Motor neuron (in vitro differentiated cells): ENCODE measurements at regions of chr16 and their contacts with region 1.

Region 1: GRCh38 chr16:89217388-89218191 is at the start of gene ZNF778:
- ATAC-seq: peak; percentile 83 to 94 (median 87)
- H3K4me3 ChIP-seq: peak within 1 kb of the TSS; percentile 66 to 92 (median 84)
- H3K27ac ChIP-seq: peak within 1 kb of the TSS; percentile 70 to 86
- H3K4me1 ChIP-seq: peaks cover 11 to 14% of the 10 kb centered on the region in 2 donors
- total RNA-seq, gene ZNF778: 6.8 to 14.7 (median 9.0) TPM

Region 2: GRCh38 chr16:88455610-88456355 is 761.8 kb before region 1 on chr16:
- in situ Hi-C with region 1: no loop called
- ATAC-seq: peak in 1 of 8 experiments; percentile 1
- H3K4me3 ChIP-seq: peak overlapping the region; percentile 30 to 54 (median 48)
- H3K27ac ChIP-seq: peak overlapping the region; percentile 10 to 23
- H3K4me1 ChIP-seq: peaks cover 9 to 13% of the 10 kb centered on the region in 2 donors

Region 3: DNA sequence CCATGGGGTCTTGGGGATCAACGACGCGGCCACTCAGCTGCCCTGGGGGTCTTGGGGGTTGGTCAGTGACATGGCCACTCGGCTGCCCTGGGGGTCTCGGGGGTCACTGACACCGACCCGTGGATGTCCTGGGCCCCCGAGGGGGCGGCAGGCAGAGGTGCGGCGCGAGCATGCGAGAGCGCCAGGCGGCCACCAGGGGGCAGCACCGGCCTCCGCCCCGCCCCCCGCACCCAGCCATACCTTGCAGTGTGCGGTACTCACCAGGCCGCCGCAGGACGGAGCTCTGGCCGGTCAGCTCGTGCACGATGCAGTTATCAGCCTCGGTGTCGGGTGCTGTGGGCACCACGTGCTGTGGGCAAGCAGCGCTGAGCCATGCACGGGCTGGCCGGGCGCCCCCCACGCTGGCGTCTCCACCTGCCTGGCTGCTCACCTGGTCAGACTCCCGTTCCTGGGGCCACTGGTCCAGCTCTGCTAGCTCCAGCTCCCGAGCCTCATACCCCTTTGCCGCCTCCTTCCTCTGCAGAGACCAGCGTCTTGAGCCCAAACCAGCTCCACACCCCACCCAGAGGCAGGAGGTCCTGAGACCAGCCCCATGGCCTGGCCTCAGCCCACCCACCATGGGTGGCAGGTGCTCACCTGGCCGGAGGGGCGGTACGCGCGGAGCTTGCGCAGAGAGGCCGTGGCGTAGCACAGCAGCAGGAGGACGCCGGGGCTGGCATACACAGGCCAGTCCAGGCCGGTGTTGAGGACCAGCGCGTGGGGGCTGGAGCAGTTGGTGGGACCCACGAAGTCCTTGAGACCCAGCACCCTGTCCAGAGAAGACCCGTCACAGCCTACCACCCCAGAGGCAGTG is 480.1 kb before region 1 on chr16:
- in situ Hi-C with region 1: loop called in 1 of 9 experiments (anchors 25 kb)
- ATAC-seq: peak; percentile 79 to 94 (median 89)
- H3K4me3 ChIP-seq: no peak overlapping the region
- H3K27ac ChIP-seq: no peak overlapping the region
- H3K4me1 ChIP-seq: peaks cover 3 to 15% of the 10 kb centered on the region in 2 donors

Region 4: DNA sequence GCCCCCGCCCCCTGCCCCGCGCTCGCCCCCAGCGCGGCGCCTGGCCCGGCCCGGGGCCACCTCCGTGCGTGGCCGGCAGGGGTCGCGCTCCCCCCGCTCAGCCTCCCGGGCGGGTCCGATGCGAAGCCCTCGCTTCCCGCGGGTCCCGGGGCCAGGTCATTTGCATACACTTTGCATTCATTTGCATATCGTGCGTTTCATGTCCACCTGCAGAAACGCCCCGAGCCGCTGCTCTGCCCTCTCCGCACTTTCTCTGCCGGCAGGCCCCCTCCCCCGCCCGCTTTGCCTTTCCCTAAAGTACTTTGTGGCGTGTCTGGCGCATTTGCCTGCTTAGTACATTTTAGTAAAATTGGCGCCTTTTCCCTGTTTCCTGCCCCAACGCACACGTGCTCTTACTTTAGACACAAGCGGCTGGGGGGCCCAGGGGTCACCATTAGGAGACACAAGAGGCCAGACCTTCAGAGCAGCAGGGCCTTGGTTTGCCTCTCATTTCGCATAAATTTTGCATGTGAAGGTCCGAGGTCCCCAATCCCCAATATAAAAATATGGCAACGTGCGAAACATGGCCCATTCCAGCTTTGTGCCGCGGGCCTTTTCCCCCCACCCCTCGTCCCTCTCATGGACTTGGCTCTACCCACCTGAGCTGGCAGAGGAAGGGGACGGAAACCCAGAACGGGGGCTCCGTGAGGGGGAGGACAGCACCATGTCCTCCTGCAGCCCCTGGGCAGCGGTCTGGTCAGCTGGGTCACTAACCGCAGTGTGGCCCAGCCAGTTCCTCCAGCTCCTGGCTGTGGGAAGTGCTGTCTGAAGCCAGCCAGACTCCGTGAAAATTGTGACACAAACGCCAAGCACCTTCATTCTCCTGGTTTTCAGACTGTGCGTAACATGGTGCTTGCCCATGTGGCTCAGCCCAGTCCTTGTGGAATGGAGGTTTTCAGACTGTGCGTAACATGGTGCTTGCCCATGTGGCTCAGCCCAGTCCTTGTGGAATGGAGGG is 275.4 kb before region 1 on chr16:
- in situ Hi-C with region 1: loop called in 1 of 9 experiments (anchors 25 kb)
- ATAC-seq: peak; percentile 52 to 91 (median 71)
- H3K4me3 ChIP-seq: peak overlapping the region; percentile 49 to 80 (median 59)
- H3K27ac ChIP-seq: no peak overlapping the region
- H3K4me1 ChIP-seq: peaks cover 3 to 11% of the 10 kb centered on the region in 2 donors